ENCODE measurements at regions of chr7 and their contacts with region 1.

Region 1: DNA sequence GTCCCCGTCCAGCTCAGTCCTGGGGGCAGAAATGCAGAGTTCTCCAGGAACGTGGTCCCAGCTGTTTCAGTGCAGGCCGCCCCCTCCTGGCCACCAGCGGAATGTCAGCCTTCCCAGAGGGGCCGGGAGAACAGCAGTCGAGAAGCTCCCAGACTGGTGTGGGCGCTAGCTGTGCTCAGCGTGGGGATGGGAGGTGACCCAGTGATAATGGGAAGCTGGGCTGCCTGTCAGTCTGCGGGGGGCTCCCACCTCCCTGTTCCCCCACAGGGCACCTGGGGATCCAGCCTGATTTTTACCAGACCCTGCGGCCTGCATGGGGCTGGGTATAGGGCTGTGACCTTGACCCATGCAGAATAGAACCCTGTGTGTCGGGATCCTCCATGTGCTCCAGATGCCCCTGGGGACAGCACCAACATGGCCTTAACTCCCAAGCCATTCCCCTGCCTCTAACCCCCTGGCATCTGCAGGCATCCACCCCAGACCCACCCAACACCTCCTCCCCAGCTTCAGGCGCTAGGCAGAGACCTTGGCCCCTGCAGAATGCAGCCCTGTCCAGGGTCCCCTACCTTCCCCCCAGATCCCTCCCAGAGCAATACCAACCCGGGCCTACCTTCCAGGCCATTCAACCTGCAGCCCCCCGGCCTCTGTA is 946 bp upstream of the ELN start:
- DNase-seq: no peak
- ATAC-seq: peak; percentile 92
- H3K4me3 ChIP-seq: no peak overlapping the region
- H3K27ac ChIP-seq: no peak overlapping the region
- H3K4me1 ChIP-seq: no peaks in the 10 kb centered on the region
- H3K27me3 ChIP-seq: peaks cover 7 to 12% of the 10 kb centered on the region in 2 experiments; a peak in 3 of 4 replicates
- CTCF ChIP-seq: peak; percentile 84 to 99 (median 94)
- EP300 ChIP-seq: no peak
- POLR2A ChIP-seq: no peak
- RAD21 ChIP-seq: peak; percentile 75

Region 2: GRCh38 chr7:73811760-73812168 is 215.3 kb before region 1 on chr7:
- CTCF ChIA-PET with region 1: no interaction called
- POLR2A ChIA-PET with region 1: no interaction called
- RAD21 ChIA-PET with region 1: no interaction called
- SMC1A ChIA-PET with region 1: no interaction called
- in situ Hi-C with region 1: no loop called
- intact Hi-C with region 1: loop called (anchors 5 kb)
- DNase-seq: no peak
- ATAC-seq: peak; percentile 91
- H3K4me3 ChIP-seq: no peak overlapping the region
- H3K27ac ChIP-seq: no peak overlapping the region
- H3K4me1 ChIP-seq: no peaks in the 10 kb centered on the region
- H3K27me3 ChIP-seq: no peaks in the 10 kb centered on the region
- CTCF ChIP-seq: peak; percentile 64 to 87 (median 83)
- EP300 ChIP-seq: no peak
- POLR2A ChIP-seq: no peak
- RAD21 ChIP-seq: peak; percentile 67

Region 3: GRCh38 chr7:73865738-73866445 is 161.1 kb before region 1 on chr7:
- CTCF ChIA-PET with region 1: interaction called, 17 read pairs
- POLR2A ChIA-PET with region 1: interaction called, 6 read pairs
- RAD21 ChIA-PET with region 1: interaction called, 3 read pairs
- SMC1A ChIA-PET with region 1: interaction called, 3 read pairs
- in situ Hi-C with region 1: loop called (anchors 5 kb)
- intact Hi-C with region 1: loop called (anchors 1 kb)
- DNase-seq: no peak
- ATAC-seq: peak; percentile 84
- H3K4me3 ChIP-seq: no peak overlapping the region
- H3K27ac ChIP-seq: no peak overlapping the region
- H3K4me1 ChIP-seq: no peaks in the 10 kb centered on the region
- H3K27me3 ChIP-seq: no peaks in the 10 kb centered on the region
- CTCF ChIP-seq: peak; percentile 44 to 63 (median 59); a peak in 5 of 6 replicates
- EP300 ChIP-seq: no peak
- POLR2A ChIP-seq: no peak
- RAD21 ChIP-seq: peak; percentile 81

Region 4: DNA sequence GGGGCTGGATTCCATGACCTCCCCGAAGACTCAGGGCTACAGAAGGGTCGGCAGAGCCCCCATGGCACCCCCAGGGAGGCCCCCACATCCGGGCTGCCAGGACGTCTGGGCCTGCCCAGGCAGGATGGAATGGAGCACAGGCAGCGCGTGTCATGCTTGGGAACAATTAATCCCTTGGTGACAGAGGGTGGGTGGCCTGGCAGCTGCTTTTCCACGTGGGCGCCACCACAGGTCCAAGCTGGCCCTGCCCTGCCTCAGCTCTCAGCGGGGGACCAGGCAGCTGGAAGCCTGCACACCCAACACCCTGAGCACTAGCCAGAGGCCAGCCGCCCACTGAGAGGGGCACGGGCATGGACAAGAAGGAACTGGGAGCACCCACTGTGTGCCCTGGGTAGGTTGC is 12.3 kb after region 1 on chr7:
- CTCF ChIA-PET with region 1: interaction called, 41 read pairs
- POLR2A ChIA-PET with region 1: no interaction called
- RAD21 ChIA-PET with region 1: no interaction called
- SMC1A ChIA-PET with region 1: no interaction called
- in situ Hi-C with region 1: no loop called
- intact Hi-C with region 1: no loop called
- DNase-seq: no peak
- ATAC-seq: no peak
- H3K4me3 ChIP-seq: no peak overlapping the region
- H3K27ac ChIP-seq: no peak overlapping the region
- H3K4me1 ChIP-seq: no peaks in the 10 kb centered on the region
- H3K27me3 ChIP-seq: peaks cover 0 to 3% of the 10 kb centered on the region in 2 experiments; a peak in 2 of 4 replicates
- CTCF ChIP-seq: no peak
- EP300 ChIP-seq: no peak
- POLR2A ChIP-seq: no peak
- RAD21 ChIP-seq: no peak